GM12878 (cell line): ENCODE measurements at regions of chr3 and their contacts with region 1.

Region 1: DNA sequence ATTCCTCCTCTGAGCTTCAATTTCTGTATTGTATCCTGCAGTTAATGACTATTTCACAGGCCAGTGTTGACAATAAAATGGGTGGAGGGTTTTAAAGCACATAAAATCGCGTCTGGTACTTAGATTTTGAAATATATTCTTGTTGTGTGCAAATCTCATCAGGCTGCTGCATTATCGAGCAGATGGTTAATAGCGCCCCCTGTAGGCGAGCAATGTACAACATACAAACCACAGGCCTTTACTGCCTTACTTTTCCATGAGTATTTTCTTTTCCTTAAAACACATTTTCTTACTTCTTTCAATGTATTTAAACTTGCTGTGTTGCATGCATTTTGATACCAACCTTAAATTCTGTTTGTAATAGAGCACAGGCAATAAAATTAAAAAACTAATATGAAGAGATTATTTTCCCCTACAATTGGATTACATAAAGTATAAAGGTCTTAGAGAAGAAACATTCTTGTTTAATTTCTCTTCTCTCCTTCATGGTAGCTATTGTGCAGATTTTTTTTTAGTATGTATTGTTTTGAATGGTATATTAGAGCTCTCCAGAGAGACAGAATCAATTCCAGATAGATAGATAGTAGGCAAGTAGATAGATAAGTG is 608.4 kb downstream of the CADM2 start:
- DNase-seq: no peak
- ATAC-seq: peak; percentile 88
- H3K4me3 ChIP-seq: no peak overlapping the region
- H3K27ac ChIP-seq: no peak overlapping the region
- H3K4me1 ChIP-seq: no peaks in the 10 kb centered on the region
- H3K27me3 ChIP-seq: no peaks in the 10 kb centered on the region
- CTCF ChIP-seq: peak; percentile 63 to 67 (median 66)
- EP300 ChIP-seq: no peak
- POLR2A ChIP-seq: no peak
- RAD21 ChIP-seq: peak; percentile 62

Region 2: DNA sequence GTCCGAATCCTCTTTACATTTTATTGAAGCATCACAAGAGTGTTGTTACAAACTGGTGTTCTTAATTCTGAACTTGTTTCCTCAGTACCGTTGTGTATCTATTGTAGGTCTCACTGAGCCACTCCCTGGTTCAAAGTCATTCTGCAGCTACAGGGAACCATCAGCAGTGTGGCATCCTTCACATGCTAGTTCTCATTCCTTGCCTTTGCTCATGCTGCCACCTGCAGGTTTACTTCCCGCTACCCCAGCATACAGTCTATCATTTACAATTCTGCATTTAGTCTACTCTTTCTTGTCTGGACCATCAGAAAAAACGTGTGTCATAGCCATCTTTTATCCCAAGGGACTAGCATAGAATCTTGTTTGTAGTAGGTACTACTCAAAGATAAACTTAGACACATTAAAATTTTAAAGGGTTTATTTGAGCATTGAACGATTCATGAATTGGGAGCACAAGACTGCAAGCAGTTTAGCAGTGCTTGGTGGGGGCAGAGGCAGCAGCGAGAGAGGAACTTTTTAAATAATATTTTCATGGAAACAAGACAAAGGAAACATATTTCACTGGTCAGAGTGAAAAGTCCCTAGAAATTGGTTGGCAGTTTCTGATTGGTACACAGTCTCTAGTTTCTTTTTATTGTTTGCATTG is 206.3 kb before region 1 on chr3:
- CTCF ChIA-PET with region 1: interaction called, 6 read pairs
- POLR2A ChIA-PET with region 1: no interaction called
- RAD21 ChIA-PET with region 1: no interaction called
- SMC1A ChIA-PET with region 1: no interaction called
- in situ Hi-C with region 1: no loop called
- intact Hi-C with region 1: loop called (anchors 5 kb)
- DNase-seq: peak; percentile 3
- ATAC-seq: peak; percentile 94
- H3K4me3 ChIP-seq: no peak overlapping the region
- H3K27ac ChIP-seq: no peak overlapping the region
- H3K4me1 ChIP-seq: no peaks in the 10 kb centered on the region
- H3K27me3 ChIP-seq: no peaks in the 10 kb centered on the region
- CTCF ChIP-seq: peak; percentile 47 to 68 (median 56)
- EP300 ChIP-seq: no peak
- POLR2A ChIP-seq: no peak
- RAD21 ChIP-seq: peak; percentile 59

Region 3: DNA sequence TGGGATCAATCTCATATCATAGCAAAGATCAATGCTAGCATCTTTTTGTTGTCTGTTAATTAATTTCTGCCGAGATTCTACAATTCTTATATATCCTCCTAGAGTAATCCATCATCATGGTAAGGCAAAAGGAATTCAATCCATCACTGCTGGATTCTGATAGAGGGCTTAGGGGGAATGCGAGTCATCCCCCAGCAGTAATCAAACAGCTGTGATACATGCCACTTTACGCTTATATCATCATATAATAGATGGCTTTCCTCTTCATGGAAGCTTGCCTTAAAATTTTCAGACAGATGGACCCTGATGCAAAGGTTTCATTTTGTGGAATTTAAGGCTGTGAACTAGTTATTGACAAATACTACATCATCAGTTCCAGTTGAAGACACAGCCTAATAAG is 37.5 kb after region 1 on chr3:
- CTCF ChIA-PET with region 1: no interaction called
- POLR2A ChIA-PET with region 1: no interaction called
- RAD21 ChIA-PET with region 1: no interaction called
- SMC1A ChIA-PET with region 1: no interaction called
- in situ Hi-C with region 1: no loop called
- intact Hi-C with region 1: no loop called
- DNase-seq: no peak
- ATAC-seq: no peak
- H3K4me3 ChIP-seq: no peak overlapping the region
- H3K27ac ChIP-seq: no peak overlapping the region
- H3K4me1 ChIP-seq: no peaks in the 10 kb centered on the region
- H3K27me3 ChIP-seq: no peaks in the 10 kb centered on the region
- CTCF ChIP-seq: no peak
- EP300 ChIP-seq: no peak
- POLR2A ChIP-seq: no peak
- RAD21 ChIP-seq: no peak